Activated naive CD4-positive, alpha-beta T cell treated with anti-CD3 and anti-CD28 coated beads, Interleukin-2, amount 10 ng/mL, durations not matched to agents 7 days and 5 days (primary cell): ENCODE measurements at regions of chr3 and their contacts with region 1.

Region 1: GRCh38 chr3:129249276-129250065 is at the start of gene COPG1:
- DNase-seq: peak; percentile 89
- H3K4me3 Mint-ChIP-seq: peak within 1 kb of the TSS; percentile 96
- H3K27ac Mint-ChIP-seq: peak within 1 kb of the TSS; percentile 96
- H3K4me1 Mint-ChIP-seq: peaks cover 64% of the 10 kb centered on the region
- H3K27me3 Mint-ChIP-seq: peaks cover 6% of the 10 kb centered on the region

Region 2: GRCh38 chr3:129068291-129068886 is 181.1 kb before region 1 on chr3:
- CTCF ChIA-PET with region 1: interaction called, 10 read pairs
- DNase-seq: peak; percentile 48
- H3K4me3 Mint-ChIP-seq: peak overlapping the region; percentile 54
- H3K27ac Mint-ChIP-seq: no peak overlapping the region
- H3K4me1 Mint-ChIP-seq: peaks cover 17% of the 10 kb centered on the region
- H3K27me3 Mint-ChIP-seq: peaks cover 25% of the 10 kb centered on the region

Region 3: DNA sequence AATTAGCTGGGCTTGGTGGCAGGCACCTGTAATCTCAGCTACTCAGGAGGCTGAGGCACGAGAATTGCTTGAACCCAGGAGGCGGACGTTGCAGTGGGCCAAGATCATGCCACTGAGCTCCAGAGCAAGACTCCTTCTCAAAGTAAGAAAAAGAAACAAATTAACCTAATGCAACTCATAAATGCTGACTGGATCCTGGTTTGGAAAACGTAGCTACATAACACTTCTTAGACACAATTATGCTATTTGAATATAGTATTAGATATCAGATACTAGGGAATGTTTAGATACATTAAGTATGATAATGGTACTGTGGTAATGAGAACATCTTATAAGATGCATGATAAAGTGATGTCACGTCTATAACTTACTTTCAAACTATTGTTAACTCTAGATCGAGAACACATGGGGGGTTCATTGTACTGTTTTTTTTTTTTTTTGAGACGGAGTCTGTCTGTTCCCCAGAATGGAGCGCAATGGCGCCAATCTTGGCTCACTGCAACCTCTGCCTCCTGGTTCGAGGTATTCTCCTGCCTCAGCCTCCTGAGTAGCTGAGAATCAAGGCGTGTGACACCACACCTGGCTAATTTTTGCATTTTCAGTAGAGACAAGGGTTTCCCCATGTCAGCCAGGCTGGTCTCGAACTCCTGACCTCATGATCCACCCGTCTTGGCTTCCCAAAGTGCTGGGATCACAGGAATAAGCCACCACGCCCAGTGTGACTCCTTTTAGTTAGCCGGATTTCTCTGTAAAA is 82.7 kb before region 1 on chr3:
- CTCF ChIA-PET with region 1: interaction called, 87 read pairs
- DNase-seq: no peak
- H3K4me3 Mint-ChIP-seq: no peak overlapping the region
- H3K27ac Mint-ChIP-seq: no peak overlapping the region
- H3K4me1 Mint-ChIP-seq: peaks cover 26% of the 10 kb centered on the region
- H3K27me3 Mint-ChIP-seq: no peaks in the 10 kb centered on the region

Region 4: GRCh38 chr3:129224984-129225393 is 24.5 kb before region 1 on chr3:
- CTCF ChIA-PET with region 1: interaction called, 28 read pairs
- DNase-seq: peak; percentile 46
- H3K4me3 Mint-ChIP-seq: peak overlapping the region; percentile 36
- H3K27ac Mint-ChIP-seq: peak overlapping the region; percentile 82
- H3K4me1 Mint-ChIP-seq: peaks cover 53% of the 10 kb centered on the region
- H3K27me3 Mint-ChIP-seq: no peaks in the 10 kb centered on the region